ENCODE measurements at regions of chr2 and their contacts with region 1.

Region 1: DNA sequence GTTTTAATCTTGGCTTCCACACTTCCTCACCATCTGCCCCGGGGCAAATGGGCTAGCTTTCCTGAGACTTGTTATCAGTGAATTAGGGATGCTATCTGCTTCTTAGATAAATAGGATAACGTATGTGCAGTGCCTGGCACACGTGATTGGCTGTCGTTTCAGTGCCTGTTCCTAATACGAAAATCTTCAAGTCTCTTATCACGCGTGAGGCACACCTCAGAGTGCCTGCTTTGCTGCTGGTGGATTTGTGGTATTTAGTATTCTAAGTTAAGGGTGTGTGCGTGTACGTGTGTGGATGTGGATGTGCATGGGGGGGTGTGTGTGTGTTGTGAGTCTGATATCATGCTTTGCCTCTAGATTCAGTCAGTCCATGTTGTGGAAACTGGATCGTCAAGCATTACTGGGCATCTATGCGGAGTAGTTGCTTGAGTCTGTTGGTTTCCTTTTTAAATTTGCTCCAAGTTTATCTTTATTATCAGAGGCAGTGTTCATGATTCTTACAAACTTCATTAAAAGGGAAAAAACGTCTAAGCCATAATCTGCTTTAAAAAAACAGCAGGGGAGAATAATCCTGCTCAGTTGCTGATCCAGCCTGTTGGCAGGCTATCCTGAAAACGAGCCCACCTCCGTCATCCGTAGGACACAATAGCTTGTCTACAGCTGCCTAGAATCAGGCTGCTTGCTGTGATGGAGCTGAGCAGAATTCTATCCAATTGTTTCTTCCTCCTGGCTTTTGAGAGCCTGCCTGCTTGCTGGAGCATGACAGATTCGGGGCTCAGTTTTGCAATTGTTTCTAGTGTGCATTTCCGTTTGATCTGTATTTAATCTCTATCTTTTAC is 6.6 kb downstream of the SH3RF3 start:
- DNase-seq: no peak
- ATAC-seq: no peak
- H3K4me3 ChIP-seq: no peak overlapping the region
- H3K27ac ChIP-seq: no peak overlapping the region
- H3K4me1 ChIP-seq: peaks cover 5% of the 10 kb centered on the region
- H3K27me3 ChIP-seq: no peaks in the 10 kb centered on the region
- CTCF ChIP-seq: no peak
- EP300 ChIP-seq: no peak
- POLR2A ChIP-seq: no peak
- RAD21 ChIP-seq: no peak

Region 2: GRCh38 chr2:109062145-109062858 is 73.3 kb before region 1 on chr2:
- CTCF ChIA-PET with region 1: no interaction called
- POLR2A ChIA-PET with region 1: no interaction called
- RAD21 ChIA-PET with region 1: no interaction called
- SMC1A ChIA-PET with region 1: no interaction called
- in situ Hi-C with region 1: no loop called
- intact Hi-C with region 1: no loop called
- DNase-seq: no peak
- ATAC-seq: no peak
- H3K4me3 ChIP-seq: no peak overlapping the region
- H3K27ac ChIP-seq: no peak overlapping the region
- H3K4me1 ChIP-seq: no peaks in the 10 kb centered on the region
- H3K27me3 ChIP-seq: no peaks in the 10 kb centered on the region; a peak in 3 of 4 replicates
- CTCF ChIP-seq: no peak
- EP300 ChIP-seq: no peak
- POLR2A ChIP-seq: no peak
- RAD21 ChIP-seq: no peak

Region 3: GRCh38 chr2:109098251-109098920 is 37.2 kb before region 1 on chr2:
- CTCF ChIA-PET with region 1: no interaction called
- POLR2A ChIA-PET with region 1: no interaction called
- RAD21 ChIA-PET with region 1: no interaction called
- SMC1A ChIA-PET with region 1: no interaction called
- in situ Hi-C with region 1: no loop called
- intact Hi-C with region 1: no loop called
- DNase-seq: no peak
- ATAC-seq: no peak
- H3K4me3 ChIP-seq: no peak overlapping the region
- H3K27ac ChIP-seq: no peak overlapping the region
- H3K4me1 ChIP-seq: no peaks in the 10 kb centered on the region
- H3K27me3 ChIP-seq: no peaks in the 10 kb centered on the region
- CTCF ChIP-seq: no peak
- EP300 ChIP-seq: no peak
- POLR2A ChIP-seq: no peak
- RAD21 ChIP-seq: no peak

Region 4: GRCh38 chr2:109185821-109186570 is 50.4 kb after region 1 on chr2:
- CTCF ChIA-PET with region 1: no interaction called
- POLR2A ChIA-PET with region 1: no interaction called
- RAD21 ChIA-PET with region 1: no interaction called
- SMC1A ChIA-PET with region 1: no interaction called
- in situ Hi-C with region 1: loop called (anchors 5 kb)
- intact Hi-C with region 1: no loop called
- DNase-seq: no peak
- ATAC-seq: no peak
- H3K4me3 ChIP-seq: no peak overlapping the region
- H3K27ac ChIP-seq: no peak overlapping the region
- H3K4me1 ChIP-seq: no peaks in the 10 kb centered on the region
- H3K27me3 ChIP-seq: no peaks in the 10 kb centered on the region
- CTCF ChIP-seq: no peak
- EP300 ChIP-seq: no peak
- POLR2A ChIP-seq: no peak
- RAD21 ChIP-seq: no peak

Measured in GM12878 (cell line).